Mammary epithelial cell (primary cell): ENCODE measurements at regions of chr16 and their contacts with region 1.

Region 1: DNA sequence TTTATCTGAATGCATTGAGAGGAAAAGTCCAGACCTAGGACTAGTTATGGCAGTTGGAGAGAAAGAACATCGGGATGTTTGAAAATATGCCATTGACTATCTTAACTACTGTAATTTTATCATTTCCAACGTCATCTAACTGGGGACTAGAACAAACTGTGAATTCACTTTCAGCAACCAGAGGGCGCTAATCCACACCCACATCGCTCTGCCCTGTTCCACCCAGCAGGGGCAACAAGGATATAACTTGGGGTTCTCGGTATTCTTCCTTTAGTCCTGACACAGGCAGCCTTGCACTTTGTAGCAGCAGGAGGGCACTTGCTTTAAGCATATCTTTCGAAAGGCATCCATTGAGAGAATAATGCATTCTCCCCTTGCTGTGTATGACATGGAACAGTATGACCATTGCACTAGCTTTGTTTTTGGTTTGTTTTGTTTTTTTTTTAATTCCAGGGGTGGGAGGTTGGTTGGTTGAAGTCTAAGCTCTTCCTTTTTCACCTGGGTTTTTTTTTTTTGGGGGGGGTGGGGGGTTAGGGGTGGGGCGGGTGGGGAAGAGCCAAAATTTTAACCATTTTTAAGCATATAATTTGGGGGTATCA is 31.5 kb downstream of the SIAH1 start:
- DNase-seq: peak; percentile 58
- H3K4me3 ChIP-seq: no peak overlapping the region
- H3K27ac ChIP-seq: no peak overlapping the region
- H3K4me1 ChIP-seq: no peaks in the 10 kb centered on the region
- H3K27me3 ChIP-seq: no peaks in the 10 kb centered on the region
- CTCF ChIP-seq: peak; percentile 90 to 95

Region 2: GRCh38 chr16:48372744-48373143 is 19.1 kb after region 1 on chr16:
- CTCF ChIA-PET with region 1: interaction called, 12 read pairs
- dilution Hi-C with region 1: no loop called
- in situ Hi-C with region 1: no loop called
- intact Hi-C with region 1: no loop called
- DNase-seq: no peak
- H3K4me3 ChIP-seq: no peak overlapping the region
- H3K27ac ChIP-seq: no peak overlapping the region
- H3K4me1 ChIP-seq: peaks cover 21% of the 10 kb centered on the region
- H3K27me3 ChIP-seq: no peaks in the 10 kb centered on the region
- CTCF ChIP-seq: no peak

Region 3: DNA sequence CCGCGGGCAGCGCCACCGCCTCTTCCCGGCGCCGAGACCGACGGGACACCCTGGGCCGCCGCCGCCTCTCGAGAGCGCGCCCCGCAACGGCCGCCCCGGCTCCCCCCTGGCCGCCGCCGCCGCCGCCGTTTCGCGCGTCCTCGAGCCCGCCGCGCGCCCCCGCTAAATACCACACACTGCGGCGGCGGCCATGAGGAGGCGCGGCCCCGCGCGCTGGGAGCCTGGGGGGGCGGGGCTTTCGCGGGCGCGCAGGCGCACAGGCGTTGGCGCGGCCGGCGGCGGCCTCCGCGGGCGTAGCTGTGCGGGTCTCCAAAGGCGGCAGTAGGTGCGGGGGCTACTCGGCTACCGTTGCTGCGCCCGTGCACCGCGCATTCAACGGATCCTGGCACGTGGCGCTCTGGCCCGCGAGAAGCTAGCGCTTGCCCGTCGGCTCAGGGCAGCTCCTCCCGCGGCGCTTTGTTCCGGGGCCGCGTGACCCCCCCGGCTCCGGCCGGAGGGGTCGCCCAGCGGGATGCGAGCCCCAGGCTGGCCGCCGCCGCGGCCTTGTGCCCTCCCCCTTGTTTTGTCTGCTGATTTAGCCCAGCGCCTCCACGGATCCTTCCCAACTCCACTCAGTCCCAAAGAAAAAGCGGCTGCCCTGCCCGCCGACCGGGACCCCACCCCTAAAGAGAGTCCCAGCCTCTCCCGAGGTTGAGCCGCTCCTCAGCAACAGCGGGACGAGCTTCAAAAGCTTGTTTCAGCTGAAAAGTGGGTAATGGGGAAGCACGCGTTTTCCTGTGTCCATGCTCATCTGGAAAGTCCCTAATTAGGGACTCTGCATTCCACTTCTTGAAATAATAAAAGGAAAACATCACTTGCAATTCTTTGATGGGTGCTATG is 31.8 kb after region 1 on chr16 and contains the start of gene SIAH1:
- CTCF ChIA-PET with region 1: no interaction called
- dilution Hi-C with region 1: loop called (anchors 5 kb)
- in situ Hi-C with region 1: no loop called
- intact Hi-C with region 1: loop called (anchors 1 kb)
- DNase-seq: peak; percentile 77
- H3K4me3 ChIP-seq: peak within 1 kb of the TSS; percentile 90 to 95 (median 92)
- H3K27ac ChIP-seq: peak within 1 kb of the TSS; percentile 88
- H3K4me1 ChIP-seq: peaks cover 3% of the 10 kb centered on the region
- H3K27me3 ChIP-seq: no peaks in the 10 kb centered on the region
- CTCF ChIP-seq: no peak
- total RNA-seq, gene SIAH1: 22.3 to 46.0 TPM

Region 4: DNA sequence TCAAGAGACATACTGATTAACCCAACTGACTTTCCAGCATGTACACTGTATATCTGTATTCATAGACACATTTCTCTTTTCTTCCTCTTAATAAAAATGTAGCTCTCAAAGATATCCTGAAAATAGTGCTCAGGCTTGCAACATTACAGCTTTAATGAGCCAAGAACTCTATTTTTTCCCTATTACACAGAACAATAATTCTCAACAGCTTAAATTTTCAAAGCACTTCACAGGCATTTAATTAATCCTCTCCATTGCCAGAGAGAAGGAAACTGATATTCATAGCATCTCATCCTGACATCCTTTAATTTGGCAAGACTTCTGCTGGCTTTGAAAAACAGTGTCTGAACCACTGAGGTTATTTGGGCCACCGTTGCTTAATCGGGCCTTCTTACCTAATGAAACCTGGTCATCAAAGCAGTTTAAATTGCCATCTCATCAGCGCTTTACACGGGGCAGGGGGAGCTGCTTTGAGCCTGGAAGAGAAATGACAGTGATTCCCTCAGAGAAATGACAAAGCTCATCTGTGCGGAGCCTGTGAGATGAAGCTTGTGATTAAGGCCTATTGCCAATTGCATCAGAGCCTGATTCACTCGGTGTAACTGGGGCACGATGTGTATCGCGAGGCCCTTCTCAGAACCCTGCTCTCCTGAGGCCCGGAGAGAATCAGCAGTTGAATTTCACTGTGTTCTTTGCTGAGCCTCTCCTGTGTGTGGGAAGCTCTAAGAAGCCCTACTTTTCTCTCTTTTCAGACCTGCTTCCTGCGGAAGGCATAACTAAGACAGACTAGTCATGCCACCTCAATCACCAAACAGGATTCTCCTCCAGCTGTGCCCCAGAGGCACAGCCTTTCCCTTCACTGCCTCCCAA is 40.1 kb after region 1 on chr16:
- CTCF ChIA-PET with region 1: no interaction called
- dilution Hi-C with region 1: loop called (anchors 5 kb)
- in situ Hi-C with region 1: no loop called
- intact Hi-C with region 1: no loop called
- DNase-seq: peak; percentile 32
- H3K4me3 ChIP-seq: no peak overlapping the region
- H3K27ac ChIP-seq: no peak overlapping the region
- H3K4me1 ChIP-seq: no peaks in the 10 kb centered on the region
- H3K27me3 ChIP-seq: no peaks in the 10 kb centered on the region
- CTCF ChIP-seq: no peak

Region 5: DNA sequence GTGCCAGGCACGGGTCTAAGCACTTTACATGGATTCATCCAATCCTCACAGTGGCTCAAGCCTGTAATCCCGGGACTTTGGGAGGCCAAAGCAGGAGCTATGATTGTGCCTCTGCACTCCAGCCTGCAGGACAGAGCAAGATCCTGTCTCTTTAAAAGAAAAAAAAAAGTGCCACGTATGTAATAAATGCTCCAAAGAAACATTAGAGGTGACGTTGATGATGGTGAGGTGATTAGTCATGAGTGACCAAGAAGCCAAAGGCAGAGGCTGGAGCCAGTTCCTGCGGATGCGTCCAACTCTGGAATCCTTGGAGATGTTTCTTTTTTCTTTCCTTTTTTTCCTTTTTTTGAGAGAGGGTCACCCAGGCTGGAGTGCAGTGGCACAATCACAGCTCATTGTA is 90.9 kb after region 1 on chr16:
- CTCF ChIA-PET with region 1: no interaction called
- dilution Hi-C with region 1: no loop called
- in situ Hi-C with region 1: no loop called
- intact Hi-C with region 1: loop called (anchors 5 kb)
- DNase-seq: peak; percentile 84
- H3K4me3 ChIP-seq: no peak overlapping the region
- H3K27ac ChIP-seq: peak overlapping the region; percentile 40
- H3K4me1 ChIP-seq: peaks cover 8% of the 10 kb centered on the region
- H3K27me3 ChIP-seq: no peaks in the 10 kb centered on the region
- CTCF ChIP-seq: no peak

Region 6: GRCh38 chr16:48526058-48526957 is 172.6 kb after region 1 on chr16:
- CTCF ChIA-PET with region 1: interaction called, 8 read pairs
- dilution Hi-C with region 1: no loop called
- in situ Hi-C with region 1: loop called (anchors 10 kb)
- intact Hi-C with region 1: loop called (anchors 1 kb)
- DNase-seq: peak; percentile 75
- H3K4me3 ChIP-seq: no peak overlapping the region
- H3K27ac ChIP-seq: peak overlapping the region; percentile 9
- H3K4me1 ChIP-seq: peaks cover 5% of the 10 kb centered on the region
- H3K27me3 ChIP-seq: no peaks in the 10 kb centered on the region
- CTCF ChIP-seq: peak; percentile 54 to 81

Region 7: DNA sequence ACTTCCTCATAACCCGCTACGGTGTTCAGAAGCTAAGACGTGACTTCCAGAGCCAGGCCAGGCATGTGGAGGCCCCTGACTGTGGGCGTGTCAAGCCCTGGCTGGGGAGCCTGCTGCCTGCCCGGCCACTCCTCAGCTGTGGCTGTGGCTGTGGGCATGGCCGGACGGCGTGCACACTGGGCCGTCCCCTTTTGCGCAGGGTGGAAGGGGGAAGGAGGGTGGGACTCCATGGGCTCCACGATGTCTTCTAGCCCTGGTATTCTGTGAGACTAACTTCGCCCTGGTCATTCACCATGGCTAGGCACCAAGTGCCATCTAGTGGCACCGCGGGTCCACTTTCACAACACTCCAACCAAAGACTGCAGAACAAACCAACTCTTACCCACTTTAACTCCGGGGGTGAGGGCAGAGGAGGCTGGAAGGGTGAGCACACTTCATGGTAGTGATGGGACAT is 188.4 kb after region 1 on chr16:
- CTCF ChIA-PET with region 1: no interaction called
- dilution Hi-C with region 1: no loop called
- in situ Hi-C with region 1: no loop called
- intact Hi-C with region 1: loop called (anchors 1 kb)
- DNase-seq: peak; percentile 46
- H3K4me3 ChIP-seq: no peak overlapping the region
- H3K27ac ChIP-seq: no peak overlapping the region
- H3K4me1 ChIP-seq: peaks cover 15% of the 10 kb centered on the region
- H3K27me3 ChIP-seq: no peaks in the 10 kb centered on the region
- CTCF ChIP-seq: peak; percentile 57 to 71